HepG2 (cell line): ENCODE measurements at regions of chr7 and their contacts with region 1.

Region 1: GRCh38 chr7:27616914-27617548 is 45.7 kb downstream of the HIBADH start:
- DNase-seq: peak; percentile 12
- ATAC-seq: peak; percentile 36
- H3K4me3 ChIP-seq: peak overlapping the region; percentile 51 to 64 (median 58)
- H3K27ac ChIP-seq: peak overlapping the region; percentile 97
- H3K4me1 ChIP-seq: peaks cover 35% of the 10 kb centered on the region
- H3K27me3 ChIP-seq: no peaks in the 10 kb centered on the region
- CTCF ChIP-seq: no peak
- EP300 ChIP-seq: no peak
- POLR2A ChIP-seq: no peak
- RAD21 ChIP-seq: no peak

Region 2: GRCh38 chr7:27586825-27587224 is 30.2 kb before region 1 on chr7:
- CTCF ChIA-PET with region 1: no interaction called
- POLR2A ChIA-PET with region 1: no interaction called
- in situ Hi-C with region 1: no loop called
- intact Hi-C with region 1: no loop called
- DNase-seq: no peak
- ATAC-seq: no peak
- H3K4me3 ChIP-seq: no peak overlapping the region
- H3K27ac ChIP-seq: no peak overlapping the region
- H3K4me1 ChIP-seq: no peaks in the 10 kb centered on the region
- H3K27me3 ChIP-seq: no peaks in the 10 kb centered on the region
- CTCF ChIP-seq: no peak
- EP300 ChIP-seq: no peak
- POLR2A ChIP-seq: no peak
- RAD21 ChIP-seq: no peak

Region 3: GRCh38 chr7:27605689-27606269 is 11.3 kb before region 1 on chr7:
- CTCF ChIA-PET with region 1: no interaction called
- POLR2A ChIA-PET with region 1: interaction called, 27 read pairs
- in situ Hi-C with region 1: no loop called
- intact Hi-C with region 1: no loop called
- DNase-seq: peak; percentile 39
- ATAC-seq: peak; percentile 64; the same call in 2 of the 3 replicates
- H3K4me3 ChIP-seq: peak overlapping the region; percentile 9 to 38 (median 13); a peak in 5 of 6 replicates
- H3K27ac ChIP-seq: peak overlapping the region; percentile 70
- H3K4me1 ChIP-seq: peaks cover 63% of the 10 kb centered on the region
- H3K27me3 ChIP-seq: no peaks in the 10 kb centered on the region
- CTCF ChIP-seq: peak; percentile 34
- EP300 ChIP-seq: no peak
- POLR2A ChIP-seq: no peak
- RAD21 ChIP-seq: no peak

Region 4: GRCh38 chr7:28112883-28113540 is 496.0 kb after region 1 on chr7:
- CTCF ChIA-PET with region 1: no interaction called
- POLR2A ChIA-PET with region 1: no interaction called
- in situ Hi-C with region 1: no loop called
- intact Hi-C with region 1: no loop called
- DNase-seq: peak; percentile 4
- ATAC-seq: no peak
- H3K4me3 ChIP-seq: no peak overlapping the region
- H3K27ac ChIP-seq: no peak overlapping the region
- H3K4me1 ChIP-seq: no peaks in the 10 kb centered on the region
- H3K27me3 ChIP-seq: no peaks in the 10 kb centered on the region
- CTCF ChIP-seq: no peak
- EP300 ChIP-seq: no peak
- POLR2A ChIP-seq: no peak
- RAD21 ChIP-seq: no peak